H1 (cell line): ENCODE measurements at regions of chr1 and their contacts with region 1.

Region 1: GRCh38 chr1:22889213-22889827 is 83.3 kb downstream of the LACTBL1 start:
- DNase-seq: no peak
- H3K4me3 ChIP-seq: no peak overlapping the region
- H3K27ac ChIP-seq: no peak overlapping the region
- H3K4me1 ChIP-seq: no peaks in the 10 kb centered on the region
- H3K27me3 ChIP-seq: no peaks in the 10 kb centered on the region
- CTCF ChIP-seq: peak in 2 of 3 experiments; percentile 32 to 62; a peak in 3 of 4 replicates
- EP300 ChIP-seq: no peak
- POLR2A ChIP-seq: no peak
- RAD21 ChIP-seq: peak; percentile 61 to 64

Region 2: DNA sequence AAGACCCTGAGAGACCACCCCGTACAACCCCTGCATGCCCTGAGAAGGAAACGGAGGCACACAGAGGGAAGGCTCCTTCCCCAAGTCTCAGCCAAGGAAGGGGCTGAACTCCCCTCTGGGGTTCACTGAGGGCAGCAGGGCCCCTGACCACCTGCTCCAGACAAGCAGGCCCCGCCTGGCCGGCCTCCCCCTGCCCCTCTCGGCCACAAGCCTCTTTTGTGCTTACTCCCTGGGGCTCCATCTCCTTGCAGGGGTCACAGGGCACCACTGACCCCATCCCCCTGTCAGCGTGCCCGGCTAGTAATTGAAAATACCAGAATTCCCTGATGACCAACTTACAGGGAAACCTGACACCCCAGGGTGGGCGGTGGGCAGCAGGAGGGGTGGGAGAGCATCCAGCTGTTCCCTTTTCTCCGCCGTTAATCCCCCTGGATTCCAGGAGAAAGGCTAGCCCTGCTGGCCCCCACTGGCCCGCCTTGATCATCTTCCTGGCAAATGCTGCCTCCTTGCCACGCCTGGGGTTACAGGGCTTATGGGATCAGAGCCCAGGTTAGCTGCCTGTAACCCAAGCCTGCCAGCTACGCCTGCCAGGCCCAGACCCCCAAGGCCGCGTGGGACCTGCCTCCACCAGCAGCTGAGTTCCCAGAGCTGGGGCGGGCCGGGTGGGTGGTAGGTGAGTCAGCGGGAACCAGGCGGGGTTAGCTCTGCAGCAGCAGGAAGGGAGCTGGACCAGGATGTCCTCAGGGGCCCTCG is 12.8 kb before region 1 on chr1:
- CTCF ChIA-PET with region 1: interaction called, 25 read pairs
- POLR2A ChIA-PET with region 1: no interaction called
- DNase-seq: no peak
- H3K4me3 ChIP-seq: no peak overlapping the region
- H3K27ac ChIP-seq: 0 out of 2 replicates have a peak overlapping the region, but pooled peaks have one; percentile 15
- H3K4me1 ChIP-seq: peaks cover 0 to 17% (median 8%) of the 10 kb centered on the region in 4 experiments; a peak in 6 of 7 replicates
- H3K27me3 ChIP-seq: no peaks in the 10 kb centered on the region
- CTCF ChIP-seq: no peak
- EP300 ChIP-seq: no peak
- POLR2A ChIP-seq: no peak
- RAD21 ChIP-seq: no peak

Region 3: DNA sequence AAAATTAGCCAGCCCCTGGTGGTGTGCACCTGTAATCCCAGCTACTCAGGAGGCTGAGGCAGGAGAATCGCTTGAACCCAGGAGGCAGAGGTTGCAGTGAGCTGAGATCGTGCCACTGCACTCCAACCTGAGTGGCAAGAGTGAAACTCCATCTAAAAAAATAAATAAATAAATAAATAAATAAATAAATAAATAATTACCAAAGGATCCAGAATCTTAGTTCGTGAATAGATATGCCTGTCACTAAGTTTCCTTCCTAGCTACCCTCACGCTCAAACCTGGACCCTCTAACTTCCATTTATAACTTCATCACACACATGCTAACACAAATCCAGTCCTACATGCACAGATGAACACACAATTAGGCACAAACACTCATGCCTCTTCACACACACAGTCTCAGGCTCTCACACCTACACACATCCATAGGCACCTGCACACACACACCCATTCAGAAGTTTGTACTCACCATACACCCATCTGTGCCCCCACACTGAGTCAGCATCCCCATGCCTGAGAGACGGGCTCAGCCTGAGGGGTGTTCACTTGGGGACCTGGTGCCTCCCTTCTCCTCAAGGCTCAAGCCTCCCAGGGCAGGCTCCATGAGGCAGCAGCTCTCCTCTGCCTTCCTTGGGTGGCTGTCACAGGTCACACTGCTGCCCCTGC is 21.8 kb after region 1 on chr1:
- CTCF ChIA-PET with region 1: interaction called, 13 read pairs
- POLR2A ChIA-PET with region 1: no interaction called
- DNase-seq: no peak
- H3K4me3 ChIP-seq: no peak overlapping the region
- H3K27ac ChIP-seq: no peak overlapping the region
- H3K4me1 ChIP-seq: no peaks in the 10 kb centered on the region
- H3K27me3 ChIP-seq: no peaks in the 10 kb centered on the region
- CTCF ChIP-seq: no peak
- EP300 ChIP-seq: no peak
- POLR2A ChIP-seq: no peak
- RAD21 ChIP-seq: no peak

Region 4: GRCh38 chr1:22930235-22930912 is 41.1 kb after region 1 on chr1:
- CTCF ChIA-PET with region 1: interaction called, 12 read pairs
- POLR2A ChIA-PET with region 1: no interaction called
- DNase-seq: peak; percentile 44 to 95
- H3K4me3 ChIP-seq: no peak overlapping the region
- H3K27ac ChIP-seq: no peak overlapping the region
- H3K4me1 ChIP-seq: no peaks in the 10 kb centered on the region
- H3K27me3 ChIP-seq: no peaks in the 10 kb centered on the region; a peak in 1 of 7 replicates
- CTCF ChIP-seq: peak; percentile 81 to 93 (median 85)
- EP300 ChIP-seq: 0 out of 3 replicates have a peak, but pooled peaks of 1 of the 2 experiments have one; percentile 46
- POLR2A ChIP-seq: no peak
- RAD21 ChIP-seq: peak; percentile 94 to 98

Region 5: DNA sequence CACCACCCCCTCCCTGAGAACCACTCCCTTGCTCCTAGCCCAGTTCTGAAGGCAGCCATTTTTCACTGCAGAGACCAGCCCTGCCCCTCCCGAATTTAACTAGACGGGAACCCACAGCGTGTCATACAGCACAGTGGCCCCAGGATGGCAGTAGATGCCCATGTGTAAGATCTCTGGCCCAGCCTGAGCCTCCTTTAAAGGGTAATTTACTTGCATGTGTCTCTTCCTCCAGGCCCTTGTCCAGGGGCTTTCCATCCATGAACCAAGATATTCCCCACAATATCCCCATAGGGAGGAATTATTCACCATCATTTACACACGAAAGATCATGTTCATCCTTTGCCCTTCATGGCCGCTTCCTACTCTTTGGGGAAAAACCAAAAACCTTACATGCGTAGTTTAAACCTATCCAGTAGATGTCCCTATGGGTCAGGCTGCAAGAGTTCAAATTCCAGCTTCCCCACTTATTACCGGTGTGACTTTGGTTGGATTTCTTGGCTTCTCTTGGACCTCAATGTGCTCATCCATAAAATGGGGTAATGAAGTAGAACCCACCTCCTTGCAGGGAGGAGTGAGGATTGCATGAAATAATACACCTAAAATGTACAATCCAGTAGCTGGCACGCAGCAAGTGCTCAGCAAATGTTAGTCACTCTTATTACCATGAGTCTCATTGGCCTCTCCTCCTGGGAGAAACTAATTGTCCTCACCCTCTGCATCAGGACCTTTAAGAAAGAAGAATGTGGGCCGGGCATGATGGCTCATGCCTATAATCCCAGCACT is 87.3 kb after region 1 on chr1:
- CTCF ChIA-PET with region 1: no interaction called
- POLR2A ChIA-PET with region 1: no interaction called
- DNase-seq: peak; percentile 57 to 79
- H3K4me3 ChIP-seq: no peak overlapping the region
- H3K27ac ChIP-seq: no peak overlapping the region
- H3K4me1 ChIP-seq: no peaks in the 10 kb centered on the region
- H3K27me3 ChIP-seq: no peaks in the 10 kb centered on the region
- CTCF ChIP-seq: peak; percentile 89 to 92 (median 91)
- EP300 ChIP-seq: no peak
- POLR2A ChIP-seq: peak in 1 of 2 experiments; percentile 36; a peak in 1 of 3 replicates
- RAD21 ChIP-seq: peak; percentile 92 to 93